Gastrocnemius medialis (tissue), 4 donors: ENCODE measurements at regions of chr4 and their contacts with region 1.

Region 1: DNA sequence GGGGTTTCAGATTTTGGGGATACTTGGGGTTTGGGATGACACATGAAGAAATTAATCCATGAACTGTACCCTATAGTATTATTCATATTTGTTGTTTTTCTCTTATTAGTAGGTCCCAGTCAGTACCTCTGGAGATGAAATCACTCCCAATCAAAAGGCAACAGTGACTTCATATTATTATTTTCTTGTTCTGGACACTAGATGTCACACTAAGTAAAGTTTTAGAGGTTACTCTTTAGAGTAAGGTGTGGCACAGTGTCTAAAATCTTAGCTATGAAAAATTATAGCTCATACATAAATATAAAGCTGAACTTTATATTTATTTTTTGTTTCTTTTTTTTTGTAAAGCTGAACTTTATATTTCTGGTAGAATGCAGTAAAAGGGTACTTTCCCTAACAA is 35.1 kb downstream of the FAM114A1 start:
- DNase-seq: no peak
- ATAC-seq: peak in 1 of 2 donors; percentile 62
- H3K4me3 ChIP-seq: no peak overlapping the region
- H3K27ac ChIP-seq: no peak overlapping the region
- H3K4me1 ChIP-seq: no peaks in the 10 kb centered on the region
- H3K27me3 ChIP-seq: no peaks in the 10 kb centered on the region
- CTCF ChIP-seq: peak in 3 of 5 experiments; percentile 21 to 36 (median 25)
- POLR2A ChIP-seq: no peak

Region 2: GRCh38 chr4:38983787-38984598 is 81.3 kb after region 1 on chr4:
- in situ Hi-C with region 1: no loop called
- intact Hi-C with region 1: no loop called
- DNase-seq: no peak
- ATAC-seq: no peak
- H3K4me3 ChIP-seq: no peak overlapping the region
- H3K27ac ChIP-seq: no peak overlapping the region
- H3K4me1 ChIP-seq: no peaks in the 10 kb centered on the region
- H3K27me3 ChIP-seq: no peaks in the 10 kb centered on the region
- CTCF ChIP-seq: no peak
- POLR2A ChIP-seq: no peak

Region 3: GRCh38 chr4:39118034-39118658 is 215.5 kb after region 1 on chr4:
- in situ Hi-C with region 1: loop called in 1 of 4 experiments (anchors 10 kb)
- intact Hi-C with region 1: no loop called
- DNase-seq: no peak
- ATAC-seq: no peak
- H3K4me3 ChIP-seq: no peak overlapping the region
- H3K27ac ChIP-seq: no peak overlapping the region
- H3K4me1 ChIP-seq: no peaks in the 10 kb centered on the region
- H3K27me3 ChIP-seq: no peaks in the 10 kb centered on the region
- CTCF ChIP-seq: no peak
- POLR2A ChIP-seq: no peak

Region 4: GRCh38 chr4:39134683-39135319 is 232.1 kb after region 1 on chr4:
- in situ Hi-C with region 1: loop called (anchors 5 to 10 kb)
- intact Hi-C with region 1: loop called (anchors 2 kb)
- DNase-seq: no peak
- ATAC-seq: peak in 1 of 2 donors; percentile 21
- H3K4me3 ChIP-seq: no peak overlapping the region
- H3K27ac ChIP-seq: no peak overlapping the region
- H3K4me1 ChIP-seq: no peaks in the 10 kb centered on the region
- H3K27me3 ChIP-seq: no peaks in the 10 kb centered on the region
- CTCF ChIP-seq: no peak
- POLR2A ChIP-seq: no peak